ENCODE measurements at regions of chr18 and their contacts with region 1.

Region 1: DNA sequence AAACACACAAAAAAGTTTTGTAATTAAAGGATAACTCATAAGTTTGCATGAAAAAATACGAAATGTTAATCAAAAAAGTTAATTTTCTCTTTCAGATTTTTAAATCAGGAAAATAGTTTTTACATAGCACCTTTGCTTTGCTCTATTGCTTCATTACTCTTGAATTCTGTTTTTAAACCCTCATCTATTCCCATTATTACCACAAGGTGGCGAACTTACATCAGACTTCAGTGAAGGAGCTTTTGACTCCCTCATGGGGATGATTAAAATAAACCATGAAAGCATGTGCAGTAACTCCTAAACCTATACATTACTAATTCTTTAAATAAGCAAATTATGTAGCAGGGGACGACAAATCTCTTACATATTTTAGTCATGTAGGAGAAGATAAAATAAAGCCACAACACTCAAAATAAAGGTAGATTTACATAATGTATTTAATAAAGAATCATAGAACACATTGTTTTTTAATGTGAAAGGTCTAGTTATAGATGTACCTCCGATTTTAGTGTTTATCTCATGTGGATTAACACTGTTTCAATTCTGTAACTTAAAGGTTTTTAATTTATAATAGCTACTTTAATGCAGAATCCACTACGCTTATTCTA is 105.2 kb downstream of the NETO1 start:
- DNase-seq: no peak
- ATAC-seq: peak; percentile 71 to 87 (median 73)
- H3K4me3 ChIP-seq: no peak overlapping the region
- H3K27ac ChIP-seq: no peak overlapping the region
- H3K4me1 ChIP-seq: no peaks in the 10 kb centered on the region
- H3K27me3 ChIP-seq: no peaks in the 10 kb centered on the region
- CTCF ChIP-seq: peak; percentile 76 to 86 (median 82)
- POLR2A ChIP-seq: no peak

Region 2: GRCh38 chr18:73842795-73843394 is 1080.3 kb after region 1 on chr18:
- intact Hi-C with region 1: loop called (anchors 5 to 10 kb)
- DNase-seq: peak in 2 of 3 donors; percentile 40 to 67
- ATAC-seq: peak; percentile 74 to 86 (median 80)
- H3K4me3 ChIP-seq: peak overlapping the region in 1 of 3 donors; percentile 2
- H3K27ac ChIP-seq: no peak overlapping the region
- H3K4me1 ChIP-seq: peaks cover 0 to 4% (median 0%) of the 10 kb centered on the region in 4 donors
- H3K27me3 ChIP-seq: no peaks in the 10 kb centered on the region
- CTCF ChIP-seq: peak; percentile 69 to 94 (median 92)
- POLR2A ChIP-seq: no peak

Region 3: GRCh38 chr18:73848656-73849055 is 1086.0 kb after region 1 on chr18:
- intact Hi-C with region 1: loop called (anchors 5 to 10 kb)
- DNase-seq: no peak
- ATAC-seq: no peak
- H3K4me3 ChIP-seq: no peak overlapping the region
- H3K27ac ChIP-seq: no peak overlapping the region
- H3K4me1 ChIP-seq: no peaks in the 10 kb centered on the region
- H3K27me3 ChIP-seq: no peaks in the 10 kb centered on the region
- CTCF ChIP-seq: no peak
- POLR2A ChIP-seq: no peak